Transverse colon (tissue), 4 donors: ENCODE measurements at regions of chr6 and their contacts with region 1.

Region 1: DNA sequence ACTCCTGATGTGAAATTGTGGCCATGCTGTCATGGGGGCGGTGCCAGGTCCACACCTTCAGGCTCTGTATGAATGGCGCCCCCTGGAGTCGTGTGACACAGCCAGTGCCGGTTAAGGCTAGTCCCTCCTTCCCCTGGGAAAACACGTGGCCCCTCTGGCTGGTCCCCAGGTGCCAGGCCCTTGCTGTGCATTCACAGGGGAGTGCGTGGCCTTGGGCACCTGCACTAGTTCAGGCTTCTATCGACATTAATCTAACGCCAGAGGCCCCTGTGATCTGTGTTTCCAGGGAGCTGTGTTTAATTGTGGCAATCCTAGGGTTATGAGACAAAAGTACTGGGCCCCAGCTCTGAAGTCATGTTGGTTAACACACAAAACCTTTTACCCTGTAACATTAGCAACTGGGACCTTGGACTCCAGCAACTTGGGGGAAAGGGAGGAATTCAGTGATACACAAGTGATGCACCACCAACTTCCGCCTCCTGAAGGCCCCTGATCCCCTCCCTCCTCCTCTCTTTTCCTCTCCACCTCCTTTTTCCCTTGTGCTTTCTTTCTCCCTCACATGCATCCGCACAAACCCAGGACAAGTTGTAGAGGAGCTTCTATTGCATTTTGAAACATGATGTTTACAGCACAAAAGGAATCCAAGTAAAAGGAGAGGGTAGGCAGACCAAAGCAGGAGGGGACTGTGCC is 74.0 kb downstream of the SSR1 start:
- DNase-seq: peak; percentile 93
- H3K4me3 ChIP-seq: no peak overlapping the region
- H3K27ac ChIP-seq: peak overlapping the region; percentile 35 to 55 (median 40)
- H3K4me1 ChIP-seq: peaks cover 19 to 57% (median 45%) of the 10 kb centered on the region in 4 donors
- H3K27me3 ChIP-seq: no peaks in the 10 kb centered on the region
- CTCF ChIP-seq: peak; percentile 55 to 87 (median 66)
- EP300 ChIP-seq: no peak
- POLR2A ChIP-seq: no peak

Region 2: DNA sequence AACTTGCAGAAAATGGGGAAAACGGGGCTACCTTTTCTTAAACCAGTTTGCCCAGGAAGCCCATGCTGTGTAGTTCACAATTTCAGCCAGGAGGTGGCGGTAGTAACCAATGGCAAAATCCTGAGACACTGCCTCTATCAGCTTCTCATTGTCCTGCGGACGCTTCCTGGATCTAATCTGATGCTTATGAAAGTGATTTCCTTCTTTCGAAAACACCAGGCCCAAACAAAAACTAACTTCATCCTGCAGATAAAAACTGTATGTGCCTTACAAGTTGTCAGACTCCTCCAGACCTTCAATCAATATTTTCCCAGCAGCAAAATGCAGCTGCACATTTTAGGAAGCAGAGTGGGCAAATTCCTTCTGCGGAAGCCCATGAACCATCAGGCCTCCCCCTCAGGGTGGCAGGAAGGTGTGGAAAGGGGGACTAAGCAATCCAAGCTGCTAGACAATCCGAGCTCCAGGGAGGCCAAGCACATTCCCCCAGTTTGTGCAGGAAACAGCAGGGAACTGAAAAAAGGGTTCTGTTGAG is 562.1 kb before region 1 on chr6:
- in situ Hi-C with region 1: loop called in 2 of 4 experiments (anchors 10 to 25 kb)
- intact Hi-C with region 1: loop called (anchors 2 kb)
- DNase-seq: peak; percentile 90
- H3K4me3 ChIP-seq: no peak overlapping the region
- H3K27ac ChIP-seq: peak overlapping the region; percentile 66 to 86 (median 72)
- H3K4me1 ChIP-seq: peaks cover 7 to 47% (median 17%) of the 10 kb centered on the region in 4 donors
- H3K27me3 ChIP-seq: no peaks in the 10 kb centered on the region
- CTCF ChIP-seq: peak; percentile 97 to 99 (median 98)
- EP300 ChIP-seq: no peak
- POLR2A ChIP-seq: no peak

Region 3: GRCh38 chr6:6724539-6725467 is 514.2 kb before region 1 on chr6:
- in situ Hi-C with region 1: loop called in 1 of 4 experiments (anchors 25 kb)
- intact Hi-C with region 1: no loop called
- DNase-seq: peak; percentile 81
- H3K4me3 ChIP-seq: peak overlapping the region; percentile 16 to 45 (median 25)
- H3K27ac ChIP-seq: peak overlapping the region; percentile 87 to 93 (median 90)
- H3K4me1 ChIP-seq: peaks cover 28 to 51% (median 40%) of the 10 kb centered on the region in 4 donors
- H3K27me3 ChIP-seq: no peaks in the 10 kb centered on the region
- CTCF ChIP-seq: peak; percentile 54 to 69 (median 59)
- EP300 ChIP-seq: no peak
- POLR2A ChIP-seq: peak; percentile 23

Region 4: GRCh38 chr6:7051233-7052114 is 187.6 kb before region 1 on chr6:
- in situ Hi-C with region 1: loop called in 1 of 4 experiments (anchors 25 kb)
- intact Hi-C with region 1: no loop called
- DNase-seq: peak; percentile 74
- H3K4me3 ChIP-seq: peak overlapping the region; percentile 38 to 63 (median 56)
- H3K27ac ChIP-seq: peak overlapping the region; percentile 91 to 94 (median 92)
- H3K4me1 ChIP-seq: peaks cover 0 to 30% (median 12%) of the 10 kb centered on the region in 4 donors
- H3K27me3 ChIP-seq: no peaks in the 10 kb centered on the region
- CTCF ChIP-seq: no peak
- EP300 ChIP-seq: no peak
- POLR2A ChIP-seq: peak; percentile 59

Region 5: GRCh38 chr6:7107578-7108195 is 131.4 kb before region 1 on chr6 and contains the start of gene RREB1:
- in situ Hi-C with region 1: loop called in 1 of 4 experiments (anchors 25 kb)
- intact Hi-C with region 1: loop called (anchors 5 kb)
- DNase-seq: peak; percentile 67
- H3K4me3 ChIP-seq: peak within 1 kb of the TSS; percentile 69 to 84 (median 76)
- H3K27ac ChIP-seq: peak within 1 kb of the TSS; percentile 94 to 99 (median 98)
- H3K4me1 ChIP-seq: peaks cover 16 to 43% (median 32%) of the 10 kb centered on the region in 4 donors
- H3K27me3 ChIP-seq: no peaks in the 10 kb centered on the region
- CTCF ChIP-seq: no peak
- EP300 ChIP-seq: no peak
- POLR2A ChIP-seq: peak; percentile 45
- total RNA-seq, gene RREB1: 73.9 to 214 (median 107) TPM